ENCODE measurements at regions of chr1 and their contacts with region 1.

Region 1: DNA sequence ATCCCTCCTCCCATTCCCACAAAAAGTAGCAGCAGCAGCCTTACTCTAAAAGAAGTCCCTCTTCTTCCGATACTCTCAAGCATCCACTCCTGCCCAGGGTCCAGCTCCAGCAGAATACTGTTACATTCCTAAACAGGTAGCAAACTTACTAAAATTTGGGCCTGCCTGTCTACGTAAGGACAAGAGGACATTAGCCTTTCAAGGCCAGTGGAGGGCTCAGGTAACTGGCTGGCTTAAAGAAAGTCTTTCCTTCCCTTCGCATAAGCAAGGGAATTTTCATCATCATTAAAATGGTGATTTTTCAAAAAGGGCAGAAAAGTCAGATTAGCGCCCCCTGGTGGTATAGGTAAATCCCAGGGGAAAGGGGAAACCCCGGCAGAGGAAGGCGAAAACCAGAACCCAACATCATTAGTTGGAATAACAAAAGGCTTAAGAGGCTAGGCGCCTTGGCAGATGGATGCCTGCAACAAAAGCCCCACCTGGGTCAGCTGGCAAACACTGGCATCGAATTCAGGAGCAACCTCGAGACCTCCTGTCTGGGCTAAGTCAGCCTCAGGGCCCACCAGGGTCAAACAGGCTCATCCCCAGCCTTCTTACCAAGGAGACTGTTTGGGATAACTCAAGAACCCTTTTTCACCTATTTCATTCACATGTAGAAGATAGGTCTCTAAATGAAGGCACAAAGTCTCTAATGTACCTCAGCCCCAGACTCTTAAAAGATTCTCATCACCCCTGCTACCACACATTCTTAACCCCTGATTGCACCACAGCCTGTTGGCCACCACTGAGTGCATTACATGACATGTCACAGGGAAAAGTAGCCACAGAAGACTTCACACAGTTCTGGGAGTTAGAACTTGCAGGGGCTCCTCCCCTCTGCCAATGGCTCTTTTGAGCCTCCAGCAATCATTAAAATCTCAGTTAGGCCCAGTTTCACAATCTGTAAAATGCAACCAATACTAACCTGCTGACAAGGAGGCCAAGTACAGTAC is 36.7 kb downstream of the ERI3 start:
- DNase-seq: peak; percentile 24
- H3K4me3 ChIP-seq: no peak overlapping the region
- H3K27ac ChIP-seq: no peak overlapping the region
- H3K4me1 ChIP-seq: no peaks in the 10 kb centered on the region
- H3K27me3 ChIP-seq: no peaks in the 10 kb centered on the region
- CTCF ChIP-seq: peak; percentile 76 to 81

Region 2: GRCh38 chr1:44008259-44008658 is 310.1 kb before region 1 on chr1:
- CTCF ChIA-PET with region 1: no interaction called
- dilution Hi-C with region 1: no loop called
- in situ Hi-C with region 1: no loop called
- intact Hi-C with region 1: loop called (anchors 5 kb)
- DNase-seq: no peak
- H3K4me3 ChIP-seq: no peak overlapping the region
- H3K27ac ChIP-seq: no peak overlapping the region
- H3K4me1 ChIP-seq: no peaks in the 10 kb centered on the region
- H3K27me3 ChIP-seq: no peaks in the 10 kb centered on the region
- CTCF ChIP-seq: no peak

Region 3: DNA sequence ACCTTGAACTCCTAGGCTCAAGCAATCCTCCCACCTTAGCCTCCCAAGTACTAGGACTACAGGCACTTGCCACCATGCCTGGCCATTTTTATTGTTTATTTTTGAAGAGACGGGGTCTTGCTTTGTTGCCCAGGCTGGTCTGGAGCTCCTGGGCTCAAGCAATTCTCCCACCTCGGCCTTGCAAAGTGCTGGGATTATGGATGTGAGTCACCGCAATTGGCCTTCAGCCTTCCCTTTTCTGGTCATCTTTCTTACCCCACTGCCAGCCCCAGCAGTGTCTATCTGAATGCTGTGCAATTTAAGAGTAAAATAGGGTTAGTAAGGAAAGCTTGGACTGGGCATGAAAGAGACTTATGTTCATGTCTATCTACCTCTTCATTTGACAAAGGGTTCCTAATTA is 205.9 kb before region 1 on chr1:
- CTCF ChIA-PET with region 1: no interaction called
- dilution Hi-C with region 1: no loop called
- in situ Hi-C with region 1: no loop called
- intact Hi-C with region 1: no loop called
- DNase-seq: no peak
- H3K4me3 ChIP-seq: no peak overlapping the region
- H3K27ac ChIP-seq: no peak overlapping the region
- H3K4me1 ChIP-seq: no peaks in the 10 kb centered on the region
- H3K27me3 ChIP-seq: no peaks in the 10 kb centered on the region
- CTCF ChIP-seq: no peak

Region 4: DNA sequence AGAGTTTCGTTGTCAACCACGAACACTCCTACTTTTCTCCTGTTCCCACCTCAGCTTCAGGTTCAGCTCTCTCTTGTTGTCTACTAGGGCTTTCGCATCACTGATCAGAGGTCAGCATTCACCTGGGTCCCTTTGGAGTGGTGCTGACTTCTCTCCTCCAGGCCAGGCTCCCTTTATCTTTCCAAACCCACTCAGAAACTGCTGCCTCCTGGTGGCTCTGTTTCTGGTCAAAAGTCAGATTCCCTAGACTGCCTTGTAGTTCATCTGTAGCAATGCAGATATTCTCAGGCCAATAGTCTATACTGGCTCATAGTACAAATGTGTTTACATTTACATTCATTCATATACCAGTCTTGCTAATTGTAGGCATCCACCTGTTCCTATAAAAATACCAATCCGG is 43.1 kb after region 1 on chr1:
- CTCF ChIA-PET with region 1: no interaction called
- dilution Hi-C with region 1: no loop called
- in situ Hi-C with region 1: no loop called
- intact Hi-C with region 1: loop called (anchors 5 kb)
- DNase-seq: no peak
- H3K4me3 ChIP-seq: no peak overlapping the region
- H3K27ac ChIP-seq: no peak overlapping the region
- H3K4me1 ChIP-seq: no peaks in the 10 kb centered on the region
- H3K27me3 ChIP-seq: peaks cover 3% of the 10 kb centered on the region
- CTCF ChIP-seq: no peak

Measured in mammary epithelial cell (primary cell).